ENCODE measurements at regions of chr16 and their contacts with region 1.

Region 1: GRCh38 chr16:66270333-66270927 is 96.1 kb upstream of the CDH5 start:
- DNase-seq: peak; percentile 68 to 91 (median 90)
- ATAC-seq: peak; percentile 83 to 87
- H3K4me3 ChIP-seq: peak overlapping the region; percentile 15
- H3K27ac ChIP-seq: no peak overlapping the region
- H3K4me1 ChIP-seq: no peaks in the 10 kb centered on the region
- H3K27me3 ChIP-seq: no peaks in the 10 kb centered on the region

Region 2: DNA sequence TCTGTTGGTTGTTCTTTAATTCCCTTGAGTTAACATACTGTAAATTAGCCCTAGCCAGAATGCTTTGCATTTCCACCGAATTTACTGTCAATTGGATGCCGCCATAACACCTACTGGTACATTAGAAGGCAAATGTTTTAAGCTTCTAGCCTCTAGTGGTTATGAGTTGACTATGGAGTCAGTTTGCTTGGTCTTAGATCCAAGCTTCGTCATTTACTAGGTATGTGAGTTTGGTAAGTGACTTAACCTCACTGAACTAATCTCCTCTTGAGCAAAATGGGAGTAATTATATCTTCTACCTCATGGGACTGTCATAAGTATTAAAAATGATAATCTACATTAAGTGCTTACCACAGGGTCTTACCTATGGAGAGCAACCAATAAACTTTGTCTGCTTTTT is 1128.2 kb before region 1 on chr16:
- intact Hi-C with region 1: loop called in 1 of 4 experiments (anchors 10 kb)
- DNase-seq: no peak
- ATAC-seq: no peak
- H3K4me3 ChIP-seq: no peak overlapping the region
- H3K27ac ChIP-seq: no peak overlapping the region
- H3K4me1 ChIP-seq: no peaks in the 10 kb centered on the region
- H3K27me3 ChIP-seq: no peaks in the 10 kb centered on the region

Region 3: DNA sequence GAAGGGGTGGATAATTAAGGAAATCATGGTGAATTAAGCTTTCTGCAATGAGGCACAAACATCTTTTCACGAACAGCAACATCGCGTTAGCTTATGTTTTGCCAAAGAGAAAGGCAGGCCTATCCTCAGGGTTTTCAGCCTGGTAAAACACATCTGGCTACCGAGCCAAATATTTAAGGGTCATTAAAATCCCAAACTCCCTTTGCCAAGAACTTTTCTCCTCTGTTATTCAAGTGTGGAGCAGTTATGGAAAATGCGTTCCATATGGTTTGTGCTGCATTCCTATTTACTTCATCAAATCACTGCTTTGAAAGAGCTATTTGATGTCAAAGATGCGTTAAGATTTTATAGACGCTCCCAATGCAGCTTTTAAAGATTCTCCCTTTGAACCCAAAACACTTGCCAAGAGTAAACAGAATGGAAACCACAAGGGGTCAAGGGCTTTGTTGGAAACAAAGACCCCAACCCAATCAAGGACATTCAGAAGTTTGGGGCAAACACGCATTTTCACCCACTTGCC is 212.2 kb before region 1 on chr16:
- intact Hi-C with region 1: no loop called
- DNase-seq: no peak
- ATAC-seq: no peak
- H3K4me3 ChIP-seq: no peak overlapping the region
- H3K27ac ChIP-seq: no peak overlapping the region
- H3K4me1 ChIP-seq: no peaks in the 10 kb centered on the region
- H3K27me3 ChIP-seq: no peaks in the 10 kb centered on the region

Region 4: DNA sequence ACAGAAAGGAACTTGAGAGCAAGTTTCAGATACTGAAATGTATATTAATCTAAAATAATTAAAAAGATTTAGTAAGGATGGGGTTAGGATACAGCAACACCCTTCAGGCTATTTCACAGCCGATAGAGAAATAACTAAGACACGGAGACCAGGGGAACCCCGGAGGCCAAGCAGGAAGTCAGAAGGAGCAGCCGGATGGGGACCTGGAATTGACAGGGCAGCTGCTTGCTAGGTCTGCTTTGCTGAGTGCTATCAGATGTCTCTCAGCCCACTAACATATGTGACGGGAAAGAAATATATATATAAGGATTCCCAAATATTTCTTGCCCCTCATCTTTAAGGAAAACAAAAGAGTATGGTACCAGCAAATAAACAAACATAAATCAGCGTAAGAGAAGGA is 58.0 kb before region 1 on chr16:
- intact Hi-C with region 1: no loop called
- DNase-seq: no peak
- ATAC-seq: no peak
- H3K4me3 ChIP-seq: no peak overlapping the region
- H3K27ac ChIP-seq: no peak overlapping the region
- H3K4me1 ChIP-seq: no peaks in the 10 kb centered on the region
- H3K27me3 ChIP-seq: no peaks in the 10 kb centered on the region

Region 5: GRCh38 chr16:66223176-66223780 is 47.2 kb before region 1 on chr16:
- intact Hi-C with region 1: no loop called
- DNase-seq: peak in 2 of 3 donors; percentile 44 to 54
- ATAC-seq: peak; percentile 25 to 41
- H3K4me3 ChIP-seq: no peak overlapping the region
- H3K27ac ChIP-seq: no peak overlapping the region
- H3K4me1 ChIP-seq: no peaks in the 10 kb centered on the region
- H3K27me3 ChIP-seq: no peaks in the 10 kb centered on the region